Activated CD4-positive, alpha-beta T cell treated with anti-CD3 and anti-CD28 coated beads for 36 hours (primary cell): ENCODE measurements at regions of chr5 and their contacts with region 1.

Region 1: GRCh38 chr5:172179361-172179989 is 8.5 kb downstream of the STK10 start:
- DNase-seq: peak; percentile 60
- ATAC-seq: peak; percentile 8
- H3K4me3 Mint-ChIP-seq: peak overlapping the region; percentile 75
- H3K27ac Mint-ChIP-seq: peak overlapping the region; percentile 99
- H3K4me1 Mint-ChIP-seq: peaks cover 98% of the 10 kb centered on the region
- H3K27me3 Mint-ChIP-seq: no peaks in the 10 kb centered on the region

Region 2: GRCh38 chr5:170312666-170313065 is 1866.8 kb before region 1 on chr5:
- CTCF ChIA-PET with region 1: no interaction called
- POLR2A ChIA-PET with region 1: no interaction called
- intact Hi-C with region 1: loop called in 1 of 2 experiments (anchors 10 kb)
- DNase-seq: peak; percentile 84
- ATAC-seq: peak; percentile 91
- H3K4me3 Mint-ChIP-seq: peak overlapping the region; percentile 80
- H3K27ac Mint-ChIP-seq: peak overlapping the region; percentile 98
- H3K4me1 Mint-ChIP-seq: peaks cover 67% of the 10 kb centered on the region
- H3K27me3 Mint-ChIP-seq: no peaks in the 10 kb centered on the region

Region 3: DNA sequence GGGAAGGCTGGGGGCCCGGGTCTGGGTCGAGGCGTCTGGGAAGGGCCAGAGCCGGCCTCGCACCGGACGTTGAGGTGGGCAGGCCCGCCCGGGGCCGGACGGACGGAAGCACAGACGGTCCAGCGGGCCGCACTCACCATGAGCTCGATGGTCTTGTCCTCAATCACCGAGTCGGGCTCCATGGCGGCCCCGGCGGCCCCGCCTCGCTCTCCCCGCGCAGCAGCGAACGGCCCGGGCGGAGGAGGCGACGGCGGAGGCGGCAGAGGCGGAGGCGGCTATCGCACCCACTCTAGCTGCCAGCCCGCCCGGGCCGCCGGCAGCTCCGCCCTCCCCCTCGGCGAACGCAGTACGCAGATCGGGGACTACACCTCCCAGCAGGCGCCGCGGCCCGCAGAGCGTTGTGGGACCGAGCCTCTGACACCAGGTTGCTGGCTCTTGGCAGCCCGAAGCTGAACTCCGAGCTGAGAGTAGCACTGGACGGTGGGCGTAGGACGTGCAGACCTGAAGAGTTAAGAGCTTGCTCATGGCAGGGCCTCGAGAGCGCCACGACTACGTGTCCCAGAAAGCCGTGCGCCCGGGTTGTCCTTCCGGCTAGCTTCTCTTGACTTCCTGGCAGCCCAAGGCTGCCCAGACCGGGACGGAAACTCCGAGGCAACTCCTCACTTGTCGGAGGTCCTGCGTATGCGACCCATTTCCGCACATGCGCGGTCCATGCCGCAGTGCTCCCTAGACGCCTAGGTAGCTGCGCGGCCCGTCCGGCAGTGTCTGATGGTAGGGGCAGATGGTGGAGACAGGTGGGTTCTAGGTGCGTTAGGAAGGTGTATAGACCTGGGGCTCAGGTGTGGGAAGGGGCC is 172.9 kb before region 1 on chr5 and contains the start of gene FBXW11:
- CTCF ChIA-PET with region 1: interaction called, 3 read pairs
- POLR2A ChIA-PET with region 1: interaction called, 15 read pairs
- intact Hi-C with region 1: no loop called
- DNase-seq: peak; percentile 97
- ATAC-seq: peak; percentile 85
- H3K4me3 Mint-ChIP-seq: peak within 1 kb of the TSS; percentile 92
- H3K27ac Mint-ChIP-seq: peak within 1 kb of the TSS; percentile 98
- H3K4me1 Mint-ChIP-seq: peaks cover 43% of the 10 kb centered on the region
- H3K27me3 Mint-ChIP-seq: no peaks in the 10 kb centered on the region
- total RNA-seq, gene FBXW11: 33.8 to 39.5 TPM

Region 4: DNA sequence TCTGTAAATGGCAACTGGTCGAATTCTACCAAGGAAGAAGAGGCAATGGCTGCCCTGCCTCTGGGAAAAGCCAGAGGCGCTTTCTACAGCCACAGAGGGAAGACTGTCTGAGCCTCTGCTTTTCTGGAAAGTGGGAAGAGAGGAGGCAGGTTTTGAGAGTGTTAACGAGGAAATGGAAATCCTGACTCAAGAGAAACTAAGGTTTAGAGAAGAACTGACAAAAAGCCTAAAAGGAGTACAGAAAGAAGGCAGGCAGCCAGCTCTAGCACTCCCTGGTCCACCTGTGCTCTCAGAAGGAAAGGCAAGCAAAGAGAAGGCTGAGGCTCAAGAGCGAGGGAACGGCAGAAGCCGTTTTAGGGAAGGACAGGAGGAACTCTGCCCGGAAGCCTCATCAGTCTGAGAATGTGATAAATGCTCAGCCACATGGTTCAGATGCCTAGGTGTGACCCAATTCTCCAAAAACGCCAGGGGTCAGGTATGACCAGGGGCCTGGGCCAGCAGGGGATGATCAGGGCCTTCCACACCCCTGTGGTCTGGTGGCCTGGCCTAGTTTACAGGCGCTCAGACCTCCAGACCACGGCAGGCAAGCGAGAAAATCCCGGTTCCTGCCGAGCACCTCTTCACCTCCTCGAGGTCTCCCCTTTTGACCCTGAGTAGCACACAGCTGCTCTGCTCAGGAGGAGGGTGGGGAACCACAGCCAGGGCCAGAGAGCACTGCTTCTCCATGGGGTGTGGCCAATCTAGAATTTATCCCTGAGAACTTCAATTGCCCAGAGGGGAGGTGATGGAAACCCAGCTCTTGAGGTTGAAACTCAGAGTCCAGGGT is 93.1 kb before region 1 on chr5:
- CTCF ChIA-PET with region 1: no interaction called
- POLR2A ChIA-PET with region 1: no interaction called
- intact Hi-C with region 1: no loop called
- DNase-seq: no peak
- ATAC-seq: no peak
- H3K4me3 Mint-ChIP-seq: no peak overlapping the region
- H3K27ac Mint-ChIP-seq: peak overlapping the region; percentile 77
- H3K4me1 Mint-ChIP-seq: peaks cover 7% of the 10 kb centered on the region
- H3K27me3 Mint-ChIP-seq: no peaks in the 10 kb centered on the region

Region 5: GRCh38 chr5:172114875-172115422 is 64.5 kb before region 1 on chr5:
- CTCF ChIA-PET with region 1: interaction called, 9 read pairs
- POLR2A ChIA-PET with region 1: interaction called, 21 read pairs
- intact Hi-C with region 1: loop called (anchors 1 kb)
- DNase-seq: peak; percentile 92
- ATAC-seq: peak; percentile 73
- H3K4me3 Mint-ChIP-seq: peak overlapping the region; percentile 80
- H3K27ac Mint-ChIP-seq: peak overlapping the region; percentile 98
- H3K4me1 Mint-ChIP-seq: peaks cover 74% of the 10 kb centered on the region
- H3K27me3 Mint-ChIP-seq: no peaks in the 10 kb centered on the region

Region 6: GRCh38 chr5:172162323-172162986 is 17.0 kb before region 1 on chr5:
- CTCF ChIA-PET with region 1: interaction called, 12 read pairs
- POLR2A ChIA-PET with region 1: interaction called, 5 read pairs
- intact Hi-C with region 1: no loop called
- DNase-seq: no peak
- ATAC-seq: no peak
- H3K4me3 Mint-ChIP-seq: no peak overlapping the region
- H3K27ac Mint-ChIP-seq: peak overlapping the region; percentile 51
- H3K4me1 Mint-ChIP-seq: peaks cover 66% of the 10 kb centered on the region
- H3K27me3 Mint-ChIP-seq: no peaks in the 10 kb centered on the region

Region 7: GRCh38 chr5:172322028-172322965 is 142.8 kb after region 1 on chr5:
- CTCF ChIA-PET with region 1: no interaction called
- POLR2A ChIA-PET with region 1: no interaction called
- intact Hi-C with region 1: no loop called
- DNase-seq: no peak
- ATAC-seq: no peak
- H3K4me3 Mint-ChIP-seq: no peak overlapping the region
- H3K27ac Mint-ChIP-seq: no peak overlapping the region
- H3K4me1 Mint-ChIP-seq: no peaks in the 10 kb centered on the region
- H3K27me3 Mint-ChIP-seq: no peaks in the 10 kb centered on the region

Region 8: DNA sequence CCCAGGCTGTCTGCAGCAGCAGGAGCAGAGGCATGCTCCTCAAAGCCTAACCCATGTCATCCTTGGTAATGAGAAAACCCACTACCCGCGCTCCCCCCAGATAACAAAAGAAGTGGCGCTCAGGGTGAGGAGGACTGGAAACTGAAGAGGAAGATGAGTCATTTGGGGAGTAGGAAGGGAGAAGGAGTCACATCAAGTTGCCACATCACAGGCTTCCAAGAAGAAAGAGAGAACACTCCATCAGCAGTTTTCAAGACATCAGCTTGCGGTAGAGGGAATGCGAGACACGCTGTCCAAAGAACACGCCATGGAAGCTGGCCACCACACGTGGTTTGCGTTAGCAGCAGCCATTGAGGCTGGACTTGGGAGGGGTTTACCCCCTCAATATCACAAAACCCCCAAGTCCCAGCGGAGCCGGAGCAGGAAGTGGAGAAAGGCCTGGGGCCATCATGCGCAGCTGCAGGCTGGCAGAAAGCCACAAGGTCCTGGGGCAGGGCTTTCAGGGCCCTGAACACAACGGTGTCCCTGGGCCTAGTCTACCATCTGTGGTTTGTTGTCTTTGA is 233.3 kb after region 1 on chr5:
- CTCF ChIA-PET with region 1: no interaction called
- POLR2A ChIA-PET with region 1: no interaction called
- intact Hi-C with region 1: loop called in 1 of 2 experiments (anchors 1 kb)
- DNase-seq: peak; percentile 46
- ATAC-seq: peak; percentile 20
- H3K4me3 Mint-ChIP-seq: no peak overlapping the region
- H3K27ac Mint-ChIP-seq: peak overlapping the region; percentile 45
- H3K4me1 Mint-ChIP-seq: peaks cover 33% of the 10 kb centered on the region
- H3K27me3 Mint-ChIP-seq: peaks cover 7% of the 10 kb centered on the region